ENCODE measurements at regions of chr20 and their contacts with region 1.

Region 1: GRCh38 chr20:25247956-25248785 is at the start of gene PYGB:
- DNase-seq: peak; percentile 84 to 85 (median 84)
- H3K4me3 ChIP-seq: peak within 1 kb of the TSS; percentile 55 to 86 (median 80)
- H3K4me3 Mint-ChIP-seq: peak within 1 kb of the TSS; percentile 95 to 96
- H3K27ac ChIP-seq: peak within 1 kb of the TSS; percentile 78 to 89
- H3K27ac Mint-ChIP-seq: peak within 1 kb of the TSS; percentile 89 to 96 (median 94)
- H3K4me1 ChIP-seq: peaks cover 20 to 24% of the 10 kb centered on the region in 2 donors
- H3K4me1 Mint-ChIP-seq: peaks cover 43% of the 10 kb centered on the region
- H3K27me3 ChIP-seq: peaks cover 0 to 2% of the 10 kb centered on the region in 2 donors
- H3K27me3 Mint-ChIP-seq: peaks cover 10 to 16% (median 12%) of the 10 kb centered on the region in 3 donors
- CTCF ChIP-seq: no peak
- polyA plus RNA-seq, gene PYGB: 26.6 to 33.2 (median 26.7) TPM

Region 2: DNA sequence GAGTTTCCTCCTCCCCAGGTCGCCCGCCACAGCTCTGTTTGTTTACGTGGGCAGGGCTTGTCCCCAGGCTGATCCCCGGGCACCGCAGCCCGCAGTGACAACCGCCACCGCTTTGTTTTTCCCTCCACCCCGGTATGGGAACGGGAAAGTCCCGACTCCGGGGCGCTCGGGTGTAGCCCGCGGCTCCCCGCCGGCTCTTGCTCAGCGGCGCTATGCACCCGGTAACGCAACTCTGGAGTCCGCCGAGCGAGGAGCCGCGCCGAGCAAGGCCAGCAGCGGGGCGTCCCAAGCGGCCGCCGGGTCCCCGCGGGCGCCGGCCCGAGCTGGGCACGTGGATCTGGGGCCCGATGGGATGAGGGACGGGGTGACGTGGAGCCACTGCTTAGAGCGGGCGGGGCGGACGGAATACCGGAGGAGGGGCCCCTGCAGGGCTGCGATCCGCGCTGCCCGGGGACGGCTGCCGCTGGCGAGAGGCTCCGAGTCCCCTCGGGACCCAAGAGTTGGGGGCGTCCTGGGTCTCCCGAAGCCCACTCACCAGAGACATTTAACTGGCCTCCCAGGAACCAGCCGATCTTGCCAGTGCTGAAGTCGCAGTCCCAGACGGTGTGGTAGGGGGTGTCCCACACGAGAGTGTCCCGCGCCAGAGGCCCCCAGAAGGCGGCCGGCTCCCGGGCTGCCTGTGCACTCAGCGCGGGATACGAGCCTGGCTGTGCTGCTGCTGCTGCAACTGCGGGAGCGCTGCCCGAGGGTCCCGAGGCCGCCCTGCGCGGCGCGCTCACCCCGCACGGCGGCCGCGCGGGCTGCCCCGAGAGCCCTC is 190.7 kb before region 1 on chr20:
- intact Hi-C with region 1: loop called in 1 of 2 experiments (anchors 5 kb)
- DNase-seq: peak; percentile 48 to 74 (median 67)
- H3K4me3 ChIP-seq: peak overlapping the region; percentile 51 to 95 (median 94)
- H3K4me3 Mint-ChIP-seq: peak overlapping the region; percentile 85 to 89
- H3K27ac ChIP-seq: peak overlapping the region; percentile 86 to 93
- H3K27ac Mint-ChIP-seq: peak overlapping the region; percentile 75 to 91 (median 89)
- H3K4me1 ChIP-seq: peaks cover 39 to 47% of the 10 kb centered on the region in 2 donors
- H3K4me1 Mint-ChIP-seq: peaks cover 46% of the 10 kb centered on the region
- H3K27me3 ChIP-seq: no peaks in the 10 kb centered on the region
- H3K27me3 Mint-ChIP-seq: peaks cover 6 to 12% (median 6%) of the 10 kb centered on the region in 3 donors
- CTCF ChIP-seq: no peak

Region 3: GRCh38 chr20:25310268-25310920 is 62.2 kb after region 1 on chr20:
- intact Hi-C with region 1: loop called in 1 of 2 experiments (anchors 5 kb)
- DNase-seq: peak; percentile 84 to 92 (median 85)
- H3K4me3 ChIP-seq: peak overlapping the region; percentile 14 to 64 (median 31)
- H3K4me3 Mint-ChIP-seq: peak overlapping the region; percentile 81 to 96
- H3K27ac ChIP-seq: peak overlapping the region; percentile 82 to 92
- H3K27ac Mint-ChIP-seq: peak overlapping the region; percentile 92 to 100 (median 96)
- H3K4me1 ChIP-seq: peaks cover 25 to 28% of the 10 kb centered on the region in 2 donors
- H3K4me1 Mint-ChIP-seq: peaks cover 29% of the 10 kb centered on the region
- H3K27me3 ChIP-seq: no peaks in the 10 kb centered on the region
- H3K27me3 Mint-ChIP-seq: peaks cover 0 to 2% (median 0%) of the 10 kb centered on the region in 3 donors
- CTCF ChIP-seq: peak; percentile 43

Region 4: GRCh38 chr20:25336561-25337422 is 88.6 kb after region 1 on chr20:
- intact Hi-C with region 1: no loop called
- DNase-seq: no peak
- H3K4me3 ChIP-seq: no peak overlapping the region
- H3K4me3 Mint-ChIP-seq: no peak overlapping the region
- H3K27ac ChIP-seq: peak overlapping the region in 1 of 2 donors; percentile 51
- H3K27ac Mint-ChIP-seq: peak overlapping the region in 3 of 7 donors; percentile 15 to 66 (median 60)
- H3K4me1 ChIP-seq: no peaks in the 10 kb centered on the region
- H3K4me1 Mint-ChIP-seq: no peaks in the 10 kb centered on the region
- H3K27me3 ChIP-seq: no peaks in the 10 kb centered on the region
- H3K27me3 Mint-ChIP-seq: no peaks in the 10 kb centered on the region
- CTCF ChIP-seq: no peak

Region 5: DNA sequence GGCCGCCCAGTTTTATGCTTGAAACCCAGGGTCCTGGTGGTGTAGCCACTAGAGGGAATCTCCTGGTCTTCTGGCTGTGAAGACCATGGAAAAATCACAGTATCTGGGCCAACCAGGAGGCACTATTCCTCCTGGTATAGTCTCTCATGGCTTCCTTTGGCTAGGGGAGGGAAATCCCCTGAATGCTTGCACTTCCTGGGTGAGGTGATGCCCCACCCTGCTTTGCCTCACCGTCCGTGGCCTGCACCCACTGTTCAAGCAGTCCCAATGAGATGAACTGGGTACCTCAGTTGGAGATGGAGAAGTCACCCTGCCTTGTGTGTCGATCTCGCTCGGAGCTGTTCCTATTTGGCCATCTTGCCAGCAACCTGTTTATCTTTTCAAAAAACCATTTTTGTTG is 458.6 kb after region 1 on chr20:
- intact Hi-C with region 1: no loop called
- DNase-seq: no peak
- H3K4me3 ChIP-seq: no peak overlapping the region
- H3K4me3 Mint-ChIP-seq: no peak overlapping the region
- H3K27ac ChIP-seq: no peak overlapping the region
- H3K27ac Mint-ChIP-seq: no peak overlapping the region
- H3K4me1 ChIP-seq: no peaks in the 10 kb centered on the region
- H3K4me1 Mint-ChIP-seq: peaks cover 5% of the 10 kb centered on the region
- H3K27me3 ChIP-seq: no peaks in the 10 kb centered on the region
- H3K27me3 Mint-ChIP-seq: no peaks in the 10 kb centered on the region
- CTCF ChIP-seq: no peak

Measured in CD14-positive monocyte (primary cell).